Colonic mucosa (tissue), 4 donors: ENCODE measurements at regions of chr5 and their contacts with region 1.

Region 1: DNA sequence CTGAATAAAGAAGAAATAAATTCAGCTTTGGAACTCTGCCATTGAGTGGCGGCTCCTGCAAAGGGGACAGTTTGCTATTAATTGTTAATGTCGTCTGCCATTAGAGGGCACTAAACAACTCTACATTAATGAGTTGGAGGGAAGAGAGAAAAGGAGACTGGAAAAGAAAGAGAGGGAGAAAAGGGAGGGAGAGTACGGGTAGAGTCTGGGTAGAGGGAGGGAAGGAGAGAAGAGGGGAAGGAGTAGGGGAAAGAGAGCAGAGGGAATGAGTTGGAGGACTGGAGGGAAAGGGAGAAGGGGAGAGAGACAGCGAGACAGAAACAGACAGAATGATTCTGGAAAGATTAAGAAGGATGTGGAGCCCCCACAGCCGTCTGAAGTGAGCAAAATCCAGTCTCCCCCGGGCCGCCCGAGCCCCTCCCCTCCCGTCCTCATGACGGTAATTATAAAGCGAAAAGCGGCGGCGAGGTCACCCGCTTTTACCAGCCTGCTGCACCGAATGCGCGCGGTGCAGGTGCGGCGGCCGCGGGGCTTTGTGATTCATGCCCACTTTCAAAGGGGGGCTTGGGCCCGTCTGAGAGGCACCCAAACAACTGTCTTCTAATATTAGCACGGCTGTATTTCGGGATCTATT is 1.9 kb upstream of the FST start:
- DNase-seq: peak; percentile 19
- H3K4me3 ChIP-seq: peak overlapping the region; percentile 12
- H3K27ac ChIP-seq: no peak overlapping the region
- H3K4me1 ChIP-seq: no peaks in the 10 kb centered on the region
- H3K27me3 ChIP-seq: peaks cover 26% of the 10 kb centered on the region
- CTCF ChIP-seq: no peak

Region 2: DNA sequence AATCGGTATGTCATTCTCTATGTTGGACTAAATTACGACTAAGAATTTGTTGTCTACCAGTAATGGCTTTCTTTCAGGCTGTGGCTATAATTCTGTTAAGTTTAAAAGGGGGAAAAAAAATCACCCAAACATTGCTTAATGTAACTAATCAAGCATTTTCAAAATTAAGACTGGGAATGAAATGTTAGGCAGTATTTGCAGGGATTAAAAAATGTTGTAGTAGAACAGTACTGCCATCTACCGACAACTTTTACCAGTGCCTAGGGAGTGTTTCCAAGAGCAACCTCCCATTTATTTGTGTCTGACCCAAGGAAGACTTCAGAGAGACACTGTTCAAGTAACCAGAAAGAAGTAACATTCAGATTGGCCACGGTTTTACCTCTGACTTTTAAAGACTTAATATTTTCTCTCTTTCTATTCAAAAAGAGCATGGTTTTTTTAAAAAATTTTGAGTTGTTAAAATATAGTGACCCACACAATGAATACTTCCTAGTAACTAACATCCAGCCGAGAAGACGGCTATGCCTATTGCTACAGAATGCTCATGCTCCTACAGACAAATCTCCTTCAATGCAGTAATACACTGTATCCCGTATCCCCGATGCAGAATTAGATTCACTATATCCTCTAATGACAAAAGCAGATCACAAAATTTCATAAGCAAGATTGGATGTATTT is 739.4 kb after region 1 on chr5:
- intact Hi-C with region 1: loop called (anchors 5 kb)
- DNase-seq: peak; percentile 40
- H3K4me3 ChIP-seq: no peak overlapping the region
- H3K27ac ChIP-seq: no peak overlapping the region
- H3K4me1 ChIP-seq: no peaks in the 10 kb centered on the region
- H3K27me3 ChIP-seq: no peaks in the 10 kb centered on the region
- CTCF ChIP-seq: peak; percentile 81